ENCODE measurements at regions of chr3 and their contacts with region 1.

Region 1: GRCh38 chr3:197599089-197599765 is 43.5 kb upstream of the BDH1 start:
- DNase-seq: peak; percentile 89
- H3K4me3 Mint-ChIP-seq: no peak overlapping the region
- H3K27ac Mint-ChIP-seq: no peak overlapping the region
- H3K4me1 Mint-ChIP-seq: peaks cover 4% of the 10 kb centered on the region
- H3K27me3 Mint-ChIP-seq: no peaks in the 10 kb centered on the region

Region 2: DNA sequence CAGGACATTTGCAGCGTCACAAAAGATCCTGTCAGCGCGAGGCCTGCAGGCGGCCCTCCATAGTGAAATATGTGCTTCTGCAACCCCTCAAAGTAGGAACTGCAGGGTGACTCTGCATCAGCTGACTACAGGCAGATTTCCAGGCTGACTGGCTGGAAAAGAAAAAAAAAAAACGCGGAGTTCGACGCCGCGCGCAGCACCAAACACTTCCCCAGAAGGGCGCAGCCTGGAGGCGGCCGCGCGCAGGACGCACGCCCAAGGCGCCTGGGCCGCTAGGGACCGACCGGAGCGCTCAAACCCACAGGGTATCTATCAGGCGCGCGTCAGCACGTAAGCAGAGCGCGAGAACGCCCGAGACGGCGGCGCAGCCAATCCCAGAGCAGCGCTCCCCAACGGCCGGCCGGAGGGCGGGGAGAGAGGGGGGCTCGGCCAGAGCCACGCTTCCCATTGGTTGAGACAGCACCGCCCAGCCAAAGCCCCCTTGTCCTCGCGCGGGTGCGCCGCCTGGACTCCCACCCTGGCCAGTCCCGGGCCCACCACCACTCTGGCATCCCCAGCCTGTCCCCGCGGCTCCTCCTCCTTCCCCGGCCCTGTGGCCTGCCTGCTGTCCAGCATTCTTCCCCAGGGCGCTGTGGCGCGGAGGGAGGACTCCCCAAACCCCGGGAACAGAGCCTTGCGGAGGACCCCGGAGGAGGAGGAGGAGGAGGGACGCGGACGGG is 44.5 kb before region 1 on chr3:
- CTCF ChIA-PET with region 1: no interaction called
- intact Hi-C with region 1: loop called (anchors 2 kb)
- DNase-seq: peak; percentile 97
- H3K4me3 Mint-ChIP-seq: peak overlapping the region; percentile 86
- H3K27ac Mint-ChIP-seq: peak overlapping the region; percentile 88
- H3K4me1 Mint-ChIP-seq: peaks cover 24% of the 10 kb centered on the region
- H3K27me3 Mint-ChIP-seq: peaks cover 10% of the 10 kb centered on the region

Region 3: GRCh38 chr3:197613199-197613598 is 14.0 kb after region 1 on chr3:
- CTCF ChIA-PET with region 1: interaction called, 20 read pairs
- intact Hi-C with region 1: no loop called
- DNase-seq: peak; percentile 57
- H3K4me3 Mint-ChIP-seq: no peak overlapping the region
- H3K27ac Mint-ChIP-seq: peak overlapping the region; percentile 62
- H3K4me1 Mint-ChIP-seq: peaks cover 13% of the 10 kb centered on the region
- H3K27me3 Mint-ChIP-seq: no peaks in the 10 kb centered on the region

Region 4: DNA sequence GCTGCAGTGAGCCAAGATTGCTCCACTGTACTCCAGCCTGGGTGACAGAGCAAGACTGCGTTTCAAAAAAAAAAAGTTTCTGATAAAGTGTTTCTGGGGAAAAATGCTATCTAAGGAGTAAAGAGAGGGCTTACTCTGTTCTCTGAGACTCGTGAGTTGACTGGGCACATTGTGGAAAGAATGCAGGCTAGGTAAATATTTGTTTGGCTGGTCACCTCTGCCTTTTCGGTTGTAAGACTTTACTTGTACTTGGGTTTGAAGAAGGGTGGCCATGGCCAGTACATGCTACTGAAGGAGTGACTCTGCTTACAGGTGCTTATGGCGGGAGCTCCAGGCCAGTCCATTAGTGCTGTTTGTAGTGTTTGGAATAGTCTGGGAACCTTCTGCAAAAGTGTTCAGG is 68.8 kb after region 1 on chr3:
- CTCF ChIA-PET with region 1: interaction called, 11 read pairs
- intact Hi-C with region 1: loop called (anchors 2 kb)
- DNase-seq: no peak
- H3K4me3 Mint-ChIP-seq: no peak overlapping the region
- H3K27ac Mint-ChIP-seq: no peak overlapping the region
- H3K4me1 Mint-ChIP-seq: no peaks in the 10 kb centered on the region
- H3K27me3 Mint-ChIP-seq: no peaks in the 10 kb centered on the region

Region 5: DNA sequence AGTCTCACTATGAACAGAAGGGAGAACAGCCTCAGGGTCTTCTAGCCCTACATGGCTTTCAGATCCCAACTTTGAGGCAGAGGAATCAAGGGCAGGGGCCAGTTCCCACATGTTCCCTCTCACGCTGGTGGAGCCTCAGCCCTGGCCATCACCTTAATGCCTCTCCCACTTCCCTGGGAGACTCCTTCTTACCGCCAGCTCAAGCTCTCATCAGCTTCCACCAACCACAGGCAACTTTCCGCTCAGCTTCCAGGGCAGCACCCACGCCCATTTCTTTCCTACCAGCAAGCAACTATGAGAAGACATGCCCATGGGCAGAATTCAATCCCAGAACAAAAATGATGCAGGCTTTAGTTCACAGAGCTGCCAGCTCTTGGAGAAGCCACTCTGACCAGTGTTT is 73.9 kb after region 1 on chr3:
- CTCF ChIA-PET with region 1: interaction called, 11 read pairs
- intact Hi-C with region 1: loop called (anchors 2 kb)
- DNase-seq: no peak
- H3K4me3 Mint-ChIP-seq: no peak overlapping the region
- H3K27ac Mint-ChIP-seq: no peak overlapping the region
- H3K4me1 Mint-ChIP-seq: no peaks in the 10 kb centered on the region
- H3K27me3 Mint-ChIP-seq: no peaks in the 10 kb centered on the region

Region 6: DNA sequence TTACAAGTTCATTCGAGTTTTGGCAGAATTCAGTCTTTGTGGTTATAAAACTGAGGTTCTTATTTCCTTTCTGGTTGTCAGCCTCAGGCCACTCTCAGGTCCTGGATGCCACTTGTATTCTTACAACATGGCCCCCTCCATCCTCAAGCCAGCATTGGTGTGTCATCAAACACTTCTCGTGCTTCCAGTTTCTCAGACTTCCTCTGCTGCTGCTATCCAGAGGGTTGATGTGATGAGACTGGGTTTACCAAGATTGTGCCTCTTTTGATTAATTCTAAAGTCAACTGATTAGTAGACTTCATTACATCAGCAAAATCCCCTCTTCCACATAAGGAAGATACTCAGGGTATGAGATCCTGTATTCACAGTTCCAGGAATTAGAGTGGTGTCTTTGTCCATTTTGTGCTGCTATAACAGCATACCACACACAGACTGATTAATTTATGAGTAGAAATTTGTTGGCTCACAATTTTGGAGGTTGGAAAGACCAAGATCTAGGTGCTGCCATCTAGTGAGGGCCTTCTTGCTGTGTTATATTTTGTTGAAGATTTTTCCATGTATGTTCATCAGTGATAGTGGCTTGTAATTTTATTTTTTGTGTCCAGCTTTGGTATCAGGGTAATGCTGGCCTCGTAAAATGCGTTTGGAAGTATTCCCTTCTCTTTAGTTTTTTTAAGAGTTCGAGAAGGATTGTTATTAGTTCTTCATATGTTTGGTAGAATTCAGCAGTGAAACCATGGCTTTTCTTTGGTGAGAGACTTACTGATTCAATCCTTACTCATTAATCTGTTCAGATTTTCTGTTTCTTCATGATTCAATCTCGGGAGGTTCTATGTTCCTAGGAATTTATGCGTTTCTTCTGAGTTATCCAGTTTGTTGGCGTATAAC is 202.9 kb after region 1 on chr3:
- CTCF ChIA-PET with region 1: interaction called, 4 read pairs
- intact Hi-C with region 1: loop called (anchors 10 kb)
- DNase-seq: peak; percentile 59
- H3K4me3 Mint-ChIP-seq: no peak overlapping the region
- H3K27ac Mint-ChIP-seq: peak overlapping the region; percentile 46
- H3K4me1 Mint-ChIP-seq: peaks cover 53% of the 10 kb centered on the region
- H3K27me3 Mint-ChIP-seq: no peaks in the 10 kb centered on the region

Region 7: GRCh38 chr3:197942956-197943556 is 343.8 kb after region 1 on chr3:
- CTCF ChIA-PET with region 1: no interaction called
- intact Hi-C with region 1: loop called (anchors 2 kb)
- DNase-seq: peak; percentile 42
- H3K4me3 Mint-ChIP-seq: no peak overlapping the region
- H3K27ac Mint-ChIP-seq: no peak overlapping the region
- H3K4me1 Mint-ChIP-seq: no peaks in the 10 kb centered on the region
- H3K27me3 Mint-ChIP-seq: no peaks in the 10 kb centered on the region

Measured in activated naive CD4-positive, alpha-beta T cell treated with anti-CD3 and anti-CD28 coated beads for 36 hours (primary cell).